ENCODE measurements at regions of chr3 and their contacts with region 1.

Region 1: DNA sequence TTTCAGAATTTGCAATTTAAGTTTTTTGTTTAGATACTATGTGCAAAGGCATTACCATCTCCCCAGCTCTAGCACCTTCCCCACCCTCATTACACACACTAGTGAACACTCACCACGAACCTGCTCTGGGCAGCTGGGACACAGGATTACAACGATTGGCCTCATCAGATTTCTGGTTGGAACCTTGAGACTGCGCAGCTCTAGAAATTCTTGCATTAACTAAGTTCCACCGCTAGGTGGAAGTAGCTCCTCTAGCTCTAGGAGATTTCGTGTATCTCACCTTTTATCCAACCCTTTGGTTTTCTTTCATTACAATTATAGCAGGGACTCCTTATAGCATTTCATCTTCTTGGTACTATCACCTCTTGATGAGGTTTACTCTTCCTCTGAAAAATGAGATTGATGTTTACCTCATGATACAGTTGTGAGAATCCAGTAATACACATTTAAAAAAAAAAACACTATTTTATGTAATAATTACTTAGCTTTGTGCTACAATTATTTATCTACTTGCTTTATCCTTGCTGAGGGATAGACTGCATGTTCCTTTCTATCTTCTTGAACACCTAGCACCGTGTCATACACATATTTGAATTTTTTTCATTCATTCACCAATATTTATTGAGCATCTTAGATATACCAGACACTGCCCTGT is 28.7 kb upstream of the PLOD2 start:
- DNase-seq: peak in 1 of 5 donors; percentile 16
- ATAC-seq: peak; percentile 61 to 75 (median 72)
- H3K4me3 ChIP-seq: no peak overlapping the region
- H3K27ac ChIP-seq: no peak overlapping the region
- H3K4me1 ChIP-seq: peaks cover 0 to 5% (median 0%) of the 10 kb centered on the region in 12 donors
- H3K27me3 ChIP-seq: no peaks in the 10 kb centered on the region
- CTCF ChIP-seq: peak; percentile 69 to 86 (median 80)
- POLR2A ChIP-seq: no peak

Region 2: DNA sequence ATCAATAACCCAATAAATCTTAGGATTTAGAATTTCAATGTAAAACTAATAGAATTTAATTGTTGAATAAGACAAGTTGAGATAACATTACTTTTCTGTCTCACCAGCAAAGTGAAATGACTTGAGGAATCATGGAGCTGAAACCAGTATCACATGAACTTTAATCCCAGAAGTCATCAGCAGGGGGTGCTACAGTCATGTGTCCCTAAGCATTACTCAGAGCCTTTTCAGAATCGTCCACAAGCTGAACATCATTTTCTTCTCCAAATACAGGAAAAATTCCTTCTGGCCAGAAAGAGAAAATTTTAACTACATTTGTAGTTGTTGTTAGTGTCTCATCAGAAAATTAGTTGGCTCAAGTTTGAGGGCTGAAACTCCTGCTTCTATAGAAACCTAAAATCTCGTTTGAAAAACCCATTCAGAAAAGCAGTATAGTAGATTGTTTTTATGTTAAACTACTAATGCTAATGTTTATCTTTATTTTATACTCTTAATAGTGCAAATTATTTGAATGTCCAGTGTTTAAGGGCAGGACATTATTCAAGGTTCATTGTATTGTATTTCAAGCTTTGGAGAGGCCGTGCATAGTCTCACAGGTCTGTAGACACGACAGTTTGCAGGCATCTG is 412.8 kb before region 1 on chr3:
- intact Hi-C with region 1: loop called in 3 of 10 experiments (anchors 5 to 10 kb)
- DNase-seq: peak in 1 of 5 donors; percentile 10
- ATAC-seq: no peak
- H3K4me3 ChIP-seq: no peak overlapping the region
- H3K27ac ChIP-seq: no peak overlapping the region
- H3K4me1 ChIP-seq: peaks cover 0 to 3% (median 0%) of the 10 kb centered on the region in 12 donors
- H3K27me3 ChIP-seq: no peaks in the 10 kb centered on the region
- CTCF ChIP-seq: peak; percentile 17 to 58 (median 38)
- POLR2A ChIP-seq: no peak

Region 3: DNA sequence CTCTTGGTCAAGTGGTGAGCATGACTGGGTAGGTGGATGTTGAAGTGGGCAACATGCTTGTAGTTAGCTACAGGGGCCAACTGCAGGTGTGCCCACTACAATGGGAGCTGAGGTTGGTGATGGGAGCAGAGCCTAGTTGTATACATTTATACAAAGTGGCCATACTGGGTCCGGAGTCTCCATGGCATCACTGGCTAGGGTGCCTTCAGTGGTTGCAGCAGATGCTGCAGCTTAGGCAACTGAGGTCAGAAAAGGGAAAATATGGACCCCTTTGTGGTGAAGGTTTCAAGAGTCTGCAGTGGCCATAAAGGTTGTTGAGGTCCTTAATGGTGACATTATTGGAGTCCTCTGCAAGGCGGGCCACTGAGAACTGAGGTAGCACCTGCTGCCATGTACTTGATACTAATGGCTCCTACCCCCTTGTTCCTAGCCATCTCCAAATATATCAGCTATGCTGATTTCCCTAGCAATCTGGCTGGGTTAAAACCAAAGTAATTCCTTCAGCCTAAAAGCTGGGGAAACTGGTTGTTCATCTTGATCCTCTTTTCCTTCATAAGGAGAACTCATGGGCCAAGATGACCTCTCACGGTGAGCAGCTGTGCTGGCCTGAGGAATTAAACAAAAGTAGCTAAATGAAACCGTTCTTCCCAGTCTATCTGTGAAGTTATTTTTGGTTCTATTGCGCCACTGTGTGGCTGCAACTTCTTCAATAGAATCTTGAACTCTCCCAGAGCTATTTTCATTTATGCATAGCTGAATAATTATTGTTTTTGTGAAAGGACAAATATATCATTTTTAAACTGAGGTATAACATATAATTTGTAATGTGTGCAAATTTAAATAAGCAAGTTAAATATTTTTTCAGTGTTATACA is 137.3 kb after region 1 on chr3:
- intact Hi-C with region 1: loop called in 1 of 10 experiments (anchors 10 kb)
- DNase-seq: peak in 3 of 5 donors; percentile 24 to 34 (median 31)
- ATAC-seq: peak; percentile 26 to 85 (median 80)
- H3K4me3 ChIP-seq: no peak overlapping the region
- H3K27ac ChIP-seq: no peak overlapping the region
- H3K4me1 ChIP-seq: peaks cover 0 to 5% (median 0%) of the 10 kb centered on the region in 12 donors
- H3K27me3 ChIP-seq: no peaks in the 10 kb centered on the region
- CTCF ChIP-seq: peak; percentile 25 to 75 (median 61)
- POLR2A ChIP-seq: no peak

Measured in heart left ventricle (tissue), 16 donors.